MCF 10A (cell line): ENCODE measurements at regions of chr2 and their contacts with region 1.

Region 1: DNA sequence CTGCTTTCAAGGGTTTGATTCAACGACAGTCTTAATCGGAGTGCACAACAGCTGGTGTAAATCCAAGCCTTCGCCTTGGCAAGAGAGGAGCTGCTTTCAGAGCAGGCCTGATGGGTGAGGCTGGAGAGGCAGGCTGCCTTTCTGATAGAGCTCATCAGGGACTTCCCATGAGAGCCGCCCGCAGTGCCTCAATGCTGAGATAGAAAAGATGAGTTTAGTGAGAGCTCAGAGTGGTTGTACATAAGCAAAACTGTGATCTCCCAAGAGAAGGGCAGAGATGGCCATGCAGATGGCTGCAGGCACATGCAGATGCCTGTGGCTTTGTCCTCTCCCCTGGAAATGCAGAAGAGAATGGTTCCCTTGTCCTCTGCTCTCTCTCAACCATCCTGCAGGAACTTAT is 122.1 kb downstream of the ARL4C start:
- DNase-seq: no peak
- H3K4me3 Mint-ChIP-seq: no peak overlapping the region
- H3K27ac Mint-ChIP-seq: no peak overlapping the region
- H3K4me1 Mint-ChIP-seq: no peaks in the 10 kb centered on the region
- H3K27me3 Mint-ChIP-seq: no peaks in the 10 kb centered on the region
- CTCF ChIP-seq: no peak

Region 2: DNA sequence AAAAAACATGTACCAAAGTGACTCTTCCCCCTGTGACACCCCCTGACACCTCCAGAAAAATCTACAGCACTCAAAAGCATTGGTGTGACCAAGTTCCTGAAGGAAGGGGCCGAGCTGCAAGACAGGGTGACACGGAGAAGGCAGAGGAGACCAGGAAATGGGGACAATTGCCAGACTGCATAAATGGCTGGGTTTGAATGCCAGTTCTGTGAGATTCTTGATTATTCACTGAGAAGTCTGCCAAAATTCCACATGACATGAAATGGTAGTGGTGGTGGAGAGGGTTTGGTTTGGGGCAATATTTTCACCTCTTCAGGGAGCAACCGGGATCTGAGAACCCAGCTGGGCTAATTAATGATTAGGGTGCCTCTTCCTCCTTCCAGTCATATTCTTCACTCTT is 56.4 kb before region 1 on chr2:
- CTCF ChIA-PET with region 1: no interaction called
- POLR2A ChIA-PET with region 1: no interaction called
- intact Hi-C with region 1: loop called (anchors 5 kb)
- DNase-seq: no peak
- H3K4me3 Mint-ChIP-seq: no peak overlapping the region
- H3K27ac Mint-ChIP-seq: no peak overlapping the region
- H3K4me1 Mint-ChIP-seq: no peaks in the 10 kb centered on the region
- H3K27me3 Mint-ChIP-seq: no peaks in the 10 kb centered on the region
- CTCF ChIP-seq: no peak

Region 3: DNA sequence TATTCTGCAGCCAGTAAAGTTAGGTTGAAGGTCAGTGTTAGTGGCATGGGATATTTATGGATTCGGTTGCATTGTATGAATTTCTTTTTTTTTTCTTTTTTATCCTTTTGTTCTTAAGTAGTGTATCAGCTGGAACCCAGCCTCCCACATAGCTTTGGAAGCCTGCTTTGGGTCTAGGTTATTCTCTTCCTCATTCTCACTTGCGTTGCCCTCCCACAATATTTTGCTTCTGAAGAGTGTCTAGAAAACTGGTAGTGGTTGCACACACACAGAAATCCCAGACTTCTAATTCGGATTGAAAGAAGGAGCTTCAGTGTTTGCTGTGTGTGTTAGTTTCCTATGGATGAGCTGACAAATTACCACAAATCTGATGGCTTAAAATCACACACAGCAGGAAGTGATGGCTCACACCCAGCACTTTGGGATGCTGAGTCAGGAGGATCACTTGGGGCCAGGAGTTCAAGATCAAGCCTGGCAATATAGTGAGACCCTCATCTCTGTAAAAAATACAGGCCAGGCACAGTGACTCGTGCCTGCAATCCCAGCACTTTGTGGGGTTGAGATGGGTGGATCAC is 17.4 kb after region 1 on chr2:
- CTCF ChIA-PET with region 1: no interaction called
- POLR2A ChIA-PET with region 1: no interaction called
- intact Hi-C with region 1: no loop called
- DNase-seq: no peak
- H3K4me3 Mint-ChIP-seq: no peak overlapping the region
- H3K27ac Mint-ChIP-seq: no peak overlapping the region
- H3K4me1 Mint-ChIP-seq: peaks cover 5% of the 10 kb centered on the region
- H3K27me3 Mint-ChIP-seq: no peaks in the 10 kb centered on the region
- CTCF ChIP-seq: no peak

Region 4: GRCh38 chr2:234690569-234691213 is 316.0 kb after region 1 on chr2:
- CTCF ChIA-PET with region 1: no interaction called
- POLR2A ChIA-PET with region 1: no interaction called
- intact Hi-C with region 1: no loop called
- DNase-seq: no peak
- H3K4me3 Mint-ChIP-seq: no peak overlapping the region
- H3K27ac Mint-ChIP-seq: no peak overlapping the region
- H3K4me1 Mint-ChIP-seq: peaks cover 24% of the 10 kb centered on the region
- H3K27me3 Mint-ChIP-seq: no peaks in the 10 kb centered on the region
- CTCF ChIP-seq: no peak